H1 (cell line): ENCODE measurements at regions of chr17 and their contacts with region 1.

Region 1: GRCh38 chr17:50055426-50056230 is at the start of gene ITGA3:
- DNase-seq: peak; percentile 84 to 89
- H3K4me3 ChIP-seq: peak within 1 kb of the TSS; percentile 37 to 65 (median 58)
- H3K27ac ChIP-seq: no peak within 1 kb of the TSS
- H3K4me1 ChIP-seq: peaks cover 11 to 21% (median 15%) of the 10 kb centered on the region in 4 experiments
- H3K27me3 ChIP-seq: peaks cover 0 to 13% (median 11%) of the 10 kb centered on the region in 4 experiments; a peak in 5 of 7 replicates
- CTCF ChIP-seq: peak in 2 of 3 experiments; percentile 4 to 17; a peak in 3 of 4 replicates
- EP300 ChIP-seq: no peak
- POLR2A ChIP-seq: no peak
- RAD21 ChIP-seq: no peak
- total RNA-seq, gene ITGA3: 21.7 and 24.2 TPM in 2 replicates

Region 2: DNA sequence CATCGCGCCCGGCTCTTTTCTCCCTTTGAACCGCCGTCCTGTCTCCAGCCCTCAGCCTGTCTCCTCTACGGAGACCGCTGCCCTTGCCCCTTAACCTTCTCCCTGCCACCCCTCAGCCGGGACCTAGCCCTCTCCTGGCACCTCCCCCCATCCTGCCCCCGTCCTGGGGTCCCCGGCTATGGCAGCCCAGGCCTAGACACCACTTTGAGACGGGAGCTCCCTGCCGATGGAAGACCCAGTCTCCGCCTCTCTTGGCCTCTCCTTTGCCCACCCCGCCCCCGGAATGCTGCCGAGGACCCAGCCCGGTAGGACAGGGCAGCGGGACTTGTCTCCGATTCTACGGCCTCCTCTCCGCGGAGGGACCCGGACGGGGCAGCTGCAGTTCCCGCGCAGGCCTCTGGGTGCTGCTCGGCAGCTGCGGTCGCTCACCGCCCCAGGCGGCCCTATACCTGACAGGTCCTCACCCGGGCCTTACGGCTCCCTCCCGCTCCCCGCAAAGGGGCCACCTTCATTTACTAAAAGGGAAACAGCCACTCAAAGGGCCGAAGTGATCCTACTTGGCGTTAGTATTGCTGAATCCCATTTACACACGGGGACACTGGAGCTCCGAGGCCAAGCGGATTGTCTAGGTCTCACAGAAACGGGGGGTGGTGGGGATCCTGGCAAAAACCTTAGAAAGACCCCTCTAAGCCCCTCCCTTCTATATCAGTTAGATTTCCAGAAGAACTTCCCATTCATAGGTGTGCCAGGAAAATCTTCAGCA is 175.2 kb before region 1 on chr17:
- CTCF ChIA-PET with region 1: no interaction called
- POLR2A ChIA-PET with region 1: no interaction called
- DNase-seq: peak; percentile 85 to 95
- H3K4me3 ChIP-seq: peak overlapping the region; percentile 17 to 61 (median 44); a peak in 6 of 8 replicates
- H3K27ac ChIP-seq: no peak overlapping the region
- H3K4me1 ChIP-seq: peaks cover 3 to 15% (median 9%) of the 10 kb centered on the region in 4 experiments
- H3K27me3 ChIP-seq: peaks cover 0 to 4% (median 1%) of the 10 kb centered on the region in 4 experiments; a peak in 5 of 7 replicates
- CTCF ChIP-seq: peak; percentile 89 to 96 (median 91)
- EP300 ChIP-seq: 0 out of 3 replicates have a peak, but pooled peaks of 1 of the 2 experiments have one; percentile 36
- POLR2A ChIP-seq: no peak
- RAD21 ChIP-seq: peak; percentile 92 to 93

Region 3: GRCh38 chr17:49904904-49905303 is 150.7 kb before region 1 on chr17:
- CTCF ChIA-PET with region 1: no interaction called
- POLR2A ChIA-PET with region 1: no interaction called
- DNase-seq: no peak
- H3K4me3 ChIP-seq: no peak overlapping the region
- H3K27ac ChIP-seq: no peak overlapping the region
- H3K4me1 ChIP-seq: peaks cover 0 to 36% (median 13%) of the 10 kb centered on the region in 4 experiments; a peak in 6 of 7 replicates
- H3K27me3 ChIP-seq: peaks cover 15 to 79% (median 70%) of the 10 kb centered on the region in 4 experiments
- CTCF ChIP-seq: no peak
- EP300 ChIP-seq: no peak
- POLR2A ChIP-seq: no peak
- RAD21 ChIP-seq: no peak

Region 4: GRCh38 chr17:50037321-50038071 is 18.1 kb before region 1 on chr17:
- CTCF ChIA-PET with region 1: interaction called, 103 read pairs
- POLR2A ChIA-PET with region 1: interaction called, 5 read pairs
- DNase-seq: no peak
- H3K4me3 ChIP-seq: no peak overlapping the region
- H3K27ac ChIP-seq: no peak overlapping the region
- H3K4me1 ChIP-seq: peaks cover 0 to 9% (median 0%) of the 10 kb centered on the region in 4 experiments; a peak in 3 of 7 replicates
- H3K27me3 ChIP-seq: no peaks in the 10 kb centered on the region; a peak in 1 of 7 replicates
- CTCF ChIP-seq: no peak
- EP300 ChIP-seq: no peak
- POLR2A ChIP-seq: no peak
- RAD21 ChIP-seq: no peak